ENCODE measurements at regions of chr4 and their contacts with region 1.

Region 1: DNA sequence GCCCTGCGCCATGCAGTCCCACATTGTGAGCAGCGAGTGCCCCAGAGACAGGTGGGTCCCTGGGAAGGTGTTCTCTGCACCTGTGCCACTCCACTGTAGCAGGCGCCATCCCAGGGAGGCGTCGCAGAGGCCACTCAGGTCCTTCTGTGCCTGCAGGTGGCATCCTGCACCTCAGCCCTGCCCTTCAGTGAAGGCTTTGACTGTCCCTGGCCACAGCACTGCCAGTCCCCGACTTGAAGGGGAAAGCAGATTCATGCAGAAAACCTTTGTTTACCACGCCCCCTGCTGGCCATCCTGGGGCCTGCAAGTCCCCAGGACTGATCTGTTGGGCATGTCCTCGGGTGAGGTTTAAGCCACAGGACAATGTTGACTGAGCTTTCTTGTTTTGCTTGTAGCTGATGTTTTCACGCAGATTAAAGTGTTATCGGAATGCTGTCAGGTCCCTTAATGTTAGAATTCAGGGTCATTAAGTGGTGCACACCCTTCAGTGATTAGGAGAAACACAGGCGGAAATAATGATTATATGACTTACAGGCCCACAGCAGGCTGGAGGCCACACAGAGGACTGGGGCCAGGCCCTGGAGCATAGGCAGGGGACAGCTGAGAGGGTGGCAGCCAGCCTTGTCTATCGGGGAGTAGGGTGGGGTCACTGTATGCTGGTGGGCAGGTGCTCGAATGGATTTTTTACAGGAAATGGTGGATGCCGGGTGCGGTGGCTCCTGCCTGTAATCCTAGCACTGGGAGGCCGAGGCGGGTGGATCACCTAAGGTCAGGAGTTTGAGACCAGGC is 5.0 kb downstream of the TACC3 start:
- DNase-seq: peak; percentile 93
- ATAC-seq: peak; percentile 82
- H3K4me3 ChIP-seq: no peak overlapping the region
- H3K27ac ChIP-seq: peak overlapping the region; percentile 79
- H3K4me1 ChIP-seq: peaks cover 37% of the 10 kb centered on the region
- H3K27me3 ChIP-seq: no peaks in the 10 kb centered on the region
- CTCF ChIP-seq: peak; percentile 100

Region 2: DNA sequence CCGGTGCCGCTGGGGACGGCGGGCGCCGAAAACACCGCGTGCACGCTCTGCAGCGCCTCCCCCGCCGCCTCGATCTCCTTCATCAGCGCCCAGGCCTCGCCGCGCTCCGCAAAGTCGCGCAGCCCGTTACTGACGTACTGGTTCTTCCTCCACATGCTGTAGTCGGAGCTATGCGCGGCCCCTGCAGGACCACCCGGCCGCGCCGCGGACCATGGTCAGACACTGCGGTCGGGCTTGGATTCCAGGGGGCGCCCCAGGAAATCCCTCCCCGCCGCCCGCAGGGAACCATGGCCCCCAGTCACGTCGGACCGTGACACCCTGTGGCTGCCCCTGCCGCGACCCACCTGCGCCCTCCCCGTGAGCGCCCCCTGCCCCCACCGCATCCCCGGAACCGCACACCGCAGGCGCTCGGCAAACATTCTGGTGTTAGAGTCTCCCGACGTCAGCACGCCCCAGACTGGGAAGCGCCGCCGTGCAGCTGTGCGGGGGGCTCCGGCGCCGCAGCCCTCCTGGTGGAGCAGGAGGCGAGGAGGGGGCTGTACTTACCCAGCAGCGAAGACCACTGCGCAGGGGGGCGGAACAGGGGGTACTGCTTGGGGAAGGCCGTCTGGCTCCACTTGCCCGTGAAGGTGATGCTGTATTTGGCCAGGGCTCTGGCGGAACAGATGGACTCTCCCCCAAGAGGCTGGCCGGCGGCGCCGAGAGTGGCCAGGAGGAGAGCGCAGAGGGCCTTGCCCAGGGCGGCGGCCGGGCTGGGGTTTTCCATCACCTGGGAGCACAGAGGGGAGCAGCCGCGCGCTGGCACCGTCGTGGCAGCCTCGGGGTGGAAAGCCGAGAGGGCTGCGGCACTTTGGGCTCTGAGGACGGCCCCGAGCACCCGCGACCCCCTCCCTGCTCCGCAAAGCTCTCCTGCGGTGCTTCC is 554.8 kb before region 1 on chr4:
- intact Hi-C with region 1: no loop called
- DNase-seq: peak; percentile 62
- ATAC-seq: peak; percentile 1
- H3K4me3 ChIP-seq: peak overlapping the region; percentile 48
- H3K27ac ChIP-seq: peak overlapping the region; percentile 55
- H3K4me1 ChIP-seq: peaks cover 33% of the 10 kb centered on the region
- H3K27me3 ChIP-seq: peaks cover 33% of the 10 kb centered on the region
- CTCF ChIP-seq: no peak

Region 3: GRCh38 chr4:1693129-1693896 is 33.0 kb before region 1 on chr4:
- intact Hi-C with region 1: loop called (anchors 5 kb)
- DNase-seq: peak; percentile 87
- ATAC-seq: peak; percentile 97
- H3K4me3 ChIP-seq: no peak overlapping the region
- H3K27ac ChIP-seq: no peak overlapping the region
- H3K4me1 ChIP-seq: no peaks in the 10 kb centered on the region
- H3K27me3 ChIP-seq: no peaks in the 10 kb centered on the region
- CTCF ChIP-seq: peak; percentile 96

Region 4: GRCh38 chr4:1784789-1785591 is 58.6 kb after region 1 on chr4:
- intact Hi-C with region 1: no loop called
- DNase-seq: no peak
- ATAC-seq: peak; percentile 21
- H3K4me3 ChIP-seq: no peak overlapping the region
- H3K27ac ChIP-seq: no peak overlapping the region
- H3K4me1 ChIP-seq: no peaks in the 10 kb centered on the region
- H3K27me3 ChIP-seq: no peaks in the 10 kb centered on the region
- CTCF ChIP-seq: no peak